A549 (cell line): ENCODE measurements at regions of chr17 and their contacts with region 1.

Region 1: DNA sequence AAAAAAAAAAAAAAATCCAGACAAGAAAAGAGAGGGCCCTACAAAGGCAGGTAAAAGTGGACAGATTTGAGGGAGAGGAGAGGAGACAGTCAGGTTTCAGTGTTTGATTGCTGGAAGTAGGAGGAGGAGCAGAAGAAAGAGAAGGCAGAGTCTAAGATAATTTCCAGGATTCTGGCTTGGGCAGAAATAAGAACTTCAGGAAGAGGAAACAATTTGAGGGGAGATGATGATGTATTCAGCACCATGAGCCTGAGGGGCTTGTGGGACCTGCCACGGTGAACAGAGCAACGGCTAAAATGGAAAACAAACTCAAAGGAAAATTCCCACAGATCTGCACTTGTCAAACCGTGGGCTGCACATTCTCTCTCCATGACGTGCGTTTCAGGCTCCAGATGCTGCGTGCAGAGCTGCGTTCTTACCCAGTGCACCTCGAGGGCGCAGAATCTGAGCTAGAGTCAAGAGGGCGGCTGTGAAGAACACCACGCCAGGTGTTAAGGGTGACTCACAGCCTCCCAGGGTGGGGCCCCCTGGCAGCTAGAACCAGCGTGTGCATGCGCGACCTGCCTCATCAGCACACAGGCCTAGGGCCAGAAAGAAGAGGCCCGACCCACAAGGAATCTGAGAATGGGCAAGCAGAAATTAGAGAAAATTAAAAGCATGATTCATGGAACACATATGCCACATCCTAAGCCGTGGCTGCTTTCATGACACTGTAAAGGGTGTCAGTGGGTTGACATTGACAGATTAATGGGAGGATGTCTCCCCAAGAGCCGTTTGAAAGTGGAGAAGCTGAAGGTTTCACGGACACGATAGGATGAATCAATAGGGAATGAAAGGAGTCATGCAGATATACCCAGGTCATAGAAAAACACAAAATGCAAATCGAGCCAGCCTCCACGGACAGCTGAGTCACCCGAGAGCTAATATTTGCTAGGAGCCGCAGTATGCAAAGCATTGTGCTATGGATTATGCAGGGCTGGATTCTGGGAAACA is 29.1 kb downstream of the MARCHF10 start:
- DNase-seq: peak; percentile 68 to 92
- ATAC-seq: peak; percentile 89 to 91
- H3K4me3 ChIP-seq: no peak overlapping the region
- H3K27ac ChIP-seq: peak overlapping the region; percentile 75 to 85
- H3K4me1 ChIP-seq: peaks cover 44% of the 10 kb centered on the region
- CTCF ChIP-seq: no peak
- EP300 ChIP-seq: peak in 1 of 2 experiments; percentile 47; a peak in 1 of 5 replicates
- POLR2A ChIP-seq: no peak
- RAD21 ChIP-seq: peak in 1 of 2 experiments; percentile 14; a peak in 1 of 5 replicates

Region 2: GRCh38 chr17:62703775-62704378 is 75.1 kb before region 1 on chr17:
- CTCF ChIA-PET with region 1: interaction called, 10 read pairs
- POLR2A ChIA-PET with region 1: interaction called, 3 read pairs
- DNase-seq: peak; percentile 64 to 74
- ATAC-seq: peak; percentile 86 to 93
- H3K4me3 ChIP-seq: peak overlapping the region; percentile 70
- H3K27ac ChIP-seq: peak overlapping the region; percentile 96 to 97
- H3K4me1 ChIP-seq: peaks cover 21% of the 10 kb centered on the region
- CTCF ChIP-seq: peak; percentile 99
- EP300 ChIP-seq: no peak; a peak in 1 of 5 replicates
- POLR2A ChIP-seq: no peak
- RAD21 ChIP-seq: peak; percentile 94 to 100

Region 3: GRCh38 chr17:62756198-62756597 is 22.8 kb before region 1 on chr17:
- CTCF ChIA-PET with region 1: no interaction called
- POLR2A ChIA-PET with region 1: no interaction called
- DNase-seq: no peak
- ATAC-seq: no peak
- H3K4me3 ChIP-seq: no peak overlapping the region
- H3K27ac ChIP-seq: no peak overlapping the region
- H3K4me1 ChIP-seq: no peaks in the 10 kb centered on the region
- CTCF ChIP-seq: no peak
- EP300 ChIP-seq: no peak
- POLR2A ChIP-seq: no peak
- RAD21 ChIP-seq: no peak

Region 4: DNA sequence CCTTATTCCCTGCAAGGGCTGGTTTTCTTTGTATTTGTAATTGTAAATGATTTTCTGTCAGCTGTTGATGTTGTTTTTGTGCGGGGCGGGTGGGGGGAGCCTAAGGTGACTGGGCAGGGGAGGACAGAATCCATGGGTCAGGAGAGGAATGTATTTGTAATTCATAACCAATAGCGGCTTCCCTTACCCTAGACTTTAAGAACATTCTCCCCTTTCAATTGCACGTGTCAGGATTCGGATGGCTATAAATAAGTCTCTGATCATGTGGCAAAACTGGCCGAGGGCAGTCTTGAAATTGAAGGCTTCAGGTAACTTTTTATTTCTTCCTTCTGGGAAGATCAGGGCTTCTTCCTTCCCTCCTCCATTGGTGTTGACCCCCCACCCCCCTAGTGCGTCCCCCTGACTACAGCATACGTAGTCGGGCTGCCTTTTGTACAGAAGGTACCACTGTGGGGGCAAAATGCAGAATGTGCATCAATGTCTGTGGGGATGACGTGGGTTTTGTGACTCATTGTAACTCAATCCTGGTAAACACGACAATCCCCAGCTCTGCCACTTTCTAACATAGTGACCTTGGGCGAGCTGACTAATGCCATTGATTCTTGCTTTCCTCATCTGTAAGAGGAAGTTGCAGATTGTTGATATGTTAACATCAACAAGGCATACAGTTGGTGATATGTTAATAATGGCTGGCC is 12.9 kb after region 1 on chr17:
- CTCF ChIA-PET with region 1: interaction called, 4 read pairs
- POLR2A ChIA-PET with region 1: interaction called, 13 read pairs
- DNase-seq: peak; percentile 87 to 98
- ATAC-seq: peak; percentile 85 to 87
- H3K4me3 ChIP-seq: peak overlapping the region; percentile 15; the same call in 1 of the 3 replicates
- H3K27ac ChIP-seq: peak overlapping the region; percentile 88 to 92
- H3K4me1 ChIP-seq: peaks cover 42% of the 10 kb centered on the region
- CTCF ChIP-seq: no peak
- EP300 ChIP-seq: peak; percentile 97 to 98
- POLR2A ChIP-seq: no peak
- RAD21 ChIP-seq: peak; percentile 49 to 65

Region 5: DNA sequence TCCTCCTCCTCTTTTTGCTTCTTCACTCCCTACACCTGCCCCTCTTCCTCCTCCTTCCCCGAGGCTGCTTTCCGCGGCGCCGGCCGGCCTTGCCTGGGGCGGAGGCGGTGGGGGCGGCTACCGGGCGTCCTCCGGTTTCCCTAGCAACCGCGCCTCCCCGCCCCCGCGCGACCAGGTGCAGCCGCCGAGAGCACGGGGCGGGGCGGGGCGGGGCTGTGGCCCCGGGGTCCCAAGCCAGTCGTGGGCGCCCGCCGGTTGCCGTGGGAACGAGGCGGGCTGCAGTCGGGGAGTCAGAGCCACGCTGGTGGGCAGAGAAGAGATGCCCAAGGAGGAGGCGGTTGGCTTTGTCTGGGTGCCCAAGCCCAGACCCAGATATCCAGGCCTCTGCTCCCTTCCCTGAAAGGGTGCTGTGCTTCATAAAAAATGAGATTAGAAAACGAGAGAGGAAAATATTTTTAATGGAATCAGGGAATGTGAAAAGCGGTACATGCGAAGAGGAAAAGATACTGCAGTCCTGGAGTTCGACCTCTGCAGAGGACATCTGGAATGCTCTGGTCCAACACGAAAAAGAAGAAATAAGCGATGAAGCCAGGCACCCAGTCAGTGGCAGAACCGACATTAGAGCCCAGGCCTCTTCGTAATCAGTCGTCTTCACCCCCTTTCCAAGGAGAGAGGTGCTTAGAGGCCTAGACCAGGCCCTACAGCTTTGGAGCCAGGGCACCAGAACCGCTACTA is 29.4 kb after region 1 on chr17 and contains the start of gene MARCHF10:
- CTCF ChIA-PET with region 1: interaction called, 10 read pairs
- POLR2A ChIA-PET with region 1: no interaction called
- DNase-seq: no peak
- ATAC-seq: peak in 1 of 2 experiments; percentile 32; a peak in 2 of 6 replicates
- H3K4me3 ChIP-seq: peak within 1 kb of the TSS; percentile 29
- H3K27ac ChIP-seq: peak within 1 kb of the TSS; percentile 89 to 90
- H3K4me1 ChIP-seq: peaks cover 37% of the 10 kb centered on the region
- CTCF ChIP-seq: no peak
- EP300 ChIP-seq: no peak
- POLR2A ChIP-seq: no peak
- RAD21 ChIP-seq: no peak
- polyA plus RNA-seq, gene MARCHF10: 0.57 and 0.73 TPM in 2 replicates

Region 6: GRCh38 chr17:62819475-62820212 is 40.7 kb after region 1 on chr17:
- CTCF ChIA-PET with region 1: interaction called, 4 read pairs
- POLR2A ChIA-PET with region 1: interaction called, 14 read pairs
- DNase-seq: peak; percentile 96 to 97
- ATAC-seq: peak; percentile 94 to 98
- H3K4me3 ChIP-seq: no peak overlapping the region
- H3K27ac ChIP-seq: peak overlapping the region; percentile 91 to 95
- H3K4me1 ChIP-seq: peaks cover 65% of the 10 kb centered on the region
- CTCF ChIP-seq: no peak
- EP300 ChIP-seq: peak in 1 of 2 experiments; percentile 80; a peak in 3 of 5 replicates
- POLR2A ChIP-seq: no peak
- RAD21 ChIP-seq: peak; percentile 53 to 66; a peak in 4 of 5 replicates

Region 7: GRCh38 chr17:62840860-62841259 is 61.9 kb after region 1 on chr17:
- CTCF ChIA-PET with region 1: no interaction called
- POLR2A ChIA-PET with region 1: no interaction called
- DNase-seq: no peak
- ATAC-seq: no peak
- H3K4me3 ChIP-seq: no peak overlapping the region
- H3K27ac ChIP-seq: no peak overlapping the region
- H3K4me1 ChIP-seq: no peaks in the 10 kb centered on the region
- CTCF ChIP-seq: no peak
- EP300 ChIP-seq: no peak
- POLR2A ChIP-seq: no peak
- RAD21 ChIP-seq: no peak

Region 8: DNA sequence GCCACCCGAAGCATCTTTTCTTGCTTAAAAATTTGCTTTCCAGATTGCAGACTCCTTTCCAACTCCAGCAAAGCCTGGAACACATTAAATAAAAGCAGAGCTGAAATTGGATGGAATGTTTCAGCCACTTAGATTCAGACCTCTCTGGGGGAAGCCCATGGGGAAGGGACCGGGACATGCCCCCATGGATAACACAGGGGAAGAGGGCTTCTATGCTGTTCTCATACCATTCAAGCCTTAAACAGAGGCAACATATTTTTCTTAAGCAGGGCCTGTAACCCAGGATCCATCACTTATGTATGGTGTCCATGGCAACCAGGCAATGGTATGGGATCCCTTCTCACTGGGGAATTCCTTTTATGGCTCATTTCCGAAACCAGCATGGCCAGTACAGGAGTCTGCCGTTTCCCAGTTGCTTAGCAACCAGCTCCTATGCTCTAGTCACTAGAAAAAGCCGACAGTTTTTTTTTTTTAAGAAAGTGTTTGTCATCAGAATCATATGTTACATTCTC is 91.1 kb after region 1 on chr17:
- CTCF ChIA-PET with region 1: no interaction called
- POLR2A ChIA-PET with region 1: no interaction called
- DNase-seq: peak in 1 of 2 experiments; percentile 36
- ATAC-seq: peak in 1 of 2 experiments; percentile 76; a peak in 3 of 6 replicates
- H3K4me3 ChIP-seq: no peak overlapping the region
- H3K27ac ChIP-seq: no peak overlapping the region
- H3K4me1 ChIP-seq: no peaks in the 10 kb centered on the region
- CTCF ChIP-seq: no peak
- EP300 ChIP-seq: no peak
- POLR2A ChIP-seq: no peak
- RAD21 ChIP-seq: no peak

Region 9: DNA sequence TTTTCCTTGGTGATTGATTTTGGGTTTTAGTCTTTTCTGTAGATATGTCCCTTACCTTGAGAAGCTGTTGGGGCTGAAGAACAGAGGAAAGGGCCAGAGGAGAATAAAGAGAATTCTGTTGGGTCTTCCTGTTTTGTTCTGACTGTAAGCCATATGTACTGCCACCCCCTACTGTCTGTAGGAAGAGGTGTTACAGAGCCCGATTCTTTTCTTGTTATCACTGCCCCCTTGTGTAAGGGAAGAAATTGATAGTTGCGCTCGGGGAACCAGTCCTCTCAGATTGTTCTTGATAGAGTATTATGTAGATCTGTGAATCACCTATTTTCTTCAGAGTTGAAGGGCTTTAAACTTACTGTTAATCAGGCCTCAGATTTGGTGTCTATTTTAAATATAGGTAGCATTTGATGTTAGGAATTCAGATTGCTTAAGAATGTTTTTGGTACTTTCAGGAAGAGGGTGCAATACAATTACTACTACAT is 189.5 kb after region 1 on chr17:
- CTCF ChIA-PET with region 1: interaction called, 12 read pairs
- POLR2A ChIA-PET with region 1: interaction called, 8 read pairs
- DNase-seq: peak; percentile 93 to 98
- ATAC-seq: peak; percentile 65 to 87
- H3K4me3 ChIP-seq: peak overlapping the region; percentile 98
- H3K27ac ChIP-seq: peak overlapping the region; percentile 65 to 98
- H3K4me1 ChIP-seq: peaks cover 56% of the 10 kb centered on the region
- CTCF ChIP-seq: peak; percentile 100
- EP300 ChIP-seq: no peak
- POLR2A ChIP-seq: no peak
- RAD21 ChIP-seq: peak; percentile 98 to 99